Breast epithelium (tissue), 4 donors: ENCODE measurements at regions of chr7 and their contacts with region 1.

Region 1: GRCh38 chr7:114148779-114149178 is 230.0 kb upstream of the PPP1R3A start:
- DNase-seq: no peak
- H3K4me3 ChIP-seq: no peak overlapping the region
- H3K27ac ChIP-seq: no peak overlapping the region
- H3K4me1 ChIP-seq: no peaks in the 10 kb centered on the region
- H3K27me3 ChIP-seq: no peaks in the 10 kb centered on the region
- CTCF ChIP-seq: no peak
- POLR2A ChIP-seq: no peak

Region 2: GRCh38 chr7:112290065-112290464 is 1858.7 kb before region 1 on chr7:
- intact Hi-C with region 1: loop called (anchors 10 kb)
- DNase-seq: no peak
- H3K4me3 ChIP-seq: no peak overlapping the region
- H3K27ac ChIP-seq: no peak overlapping the region
- H3K4me1 ChIP-seq: no peaks in the 10 kb centered on the region
- H3K27me3 ChIP-seq: no peaks in the 10 kb centered on the region
- CTCF ChIP-seq: no peak
- POLR2A ChIP-seq: no peak

Region 3: GRCh38 chr7:114160925-114161324 is 12.1 kb after region 1 on chr7:
- intact Hi-C with region 1: loop called (anchors 1 kb)
- DNase-seq: no peak
- H3K4me3 ChIP-seq: no peak overlapping the region
- H3K27ac ChIP-seq: no peak overlapping the region
- H3K4me1 ChIP-seq: no peaks in the 10 kb centered on the region
- H3K27me3 ChIP-seq: no peaks in the 10 kb centered on the region
- CTCF ChIP-seq: no peak
- POLR2A ChIP-seq: no peak

Region 4: GRCh38 chr7:114175125-114175524 is 26.3 kb after region 1 on chr7:
- intact Hi-C with region 1: no loop called
- DNase-seq: no peak
- H3K4me3 ChIP-seq: no peak overlapping the region
- H3K27ac ChIP-seq: no peak overlapping the region
- H3K4me1 ChIP-seq: no peaks in the 10 kb centered on the region
- H3K27me3 ChIP-seq: no peaks in the 10 kb centered on the region
- CTCF ChIP-seq: no peak
- POLR2A ChIP-seq: no peak